ENCODE measurements at regions of chr5 and their contacts with region 1.

Region 1: GRCh38 chr5:143824851-143825720 is 13.1 kb downstream of the HMHB1 start:
- DNase-seq: peak; percentile 45
- H3K4me3 ChIP-seq: no peak overlapping the region
- CTCF ChIP-seq: peak; percentile 92

Region 2: GRCh38 chr5:142938266-142938880 is 886.7 kb before region 1 on chr5:
- in situ Hi-C with region 1: loop called (anchors 10 kb)
- DNase-seq: no peak
- H3K4me3 ChIP-seq: no peak overlapping the region
- CTCF ChIP-seq: no peak

Region 3: GRCh38 chr5:143413958-143414669 is 411.0 kb before region 1 on chr5:
- in situ Hi-C with region 1: loop called (anchors 10 kb)
- DNase-seq: no peak
- H3K4me3 ChIP-seq: no peak overlapping the region
- CTCF ChIP-seq: no peak

Region 4: GRCh38 chr5:143576711-143577484 is 248.2 kb before region 1 on chr5:
- in situ Hi-C with region 1: no loop called
- DNase-seq: peak; percentile 54
- H3K4me3 ChIP-seq: no peak overlapping the region
- CTCF ChIP-seq: no peak

Region 5: GRCh38 chr5:143717400-143717799 is 107.7 kb before region 1 on chr5:
- in situ Hi-C with region 1: no loop called
- DNase-seq: peak; percentile 65
- H3K4me3 ChIP-seq: no peak overlapping the region
- CTCF ChIP-seq: no peak